ENCODE measurements at regions of chr17 and their contacts with region 1.

Region 1: DNA sequence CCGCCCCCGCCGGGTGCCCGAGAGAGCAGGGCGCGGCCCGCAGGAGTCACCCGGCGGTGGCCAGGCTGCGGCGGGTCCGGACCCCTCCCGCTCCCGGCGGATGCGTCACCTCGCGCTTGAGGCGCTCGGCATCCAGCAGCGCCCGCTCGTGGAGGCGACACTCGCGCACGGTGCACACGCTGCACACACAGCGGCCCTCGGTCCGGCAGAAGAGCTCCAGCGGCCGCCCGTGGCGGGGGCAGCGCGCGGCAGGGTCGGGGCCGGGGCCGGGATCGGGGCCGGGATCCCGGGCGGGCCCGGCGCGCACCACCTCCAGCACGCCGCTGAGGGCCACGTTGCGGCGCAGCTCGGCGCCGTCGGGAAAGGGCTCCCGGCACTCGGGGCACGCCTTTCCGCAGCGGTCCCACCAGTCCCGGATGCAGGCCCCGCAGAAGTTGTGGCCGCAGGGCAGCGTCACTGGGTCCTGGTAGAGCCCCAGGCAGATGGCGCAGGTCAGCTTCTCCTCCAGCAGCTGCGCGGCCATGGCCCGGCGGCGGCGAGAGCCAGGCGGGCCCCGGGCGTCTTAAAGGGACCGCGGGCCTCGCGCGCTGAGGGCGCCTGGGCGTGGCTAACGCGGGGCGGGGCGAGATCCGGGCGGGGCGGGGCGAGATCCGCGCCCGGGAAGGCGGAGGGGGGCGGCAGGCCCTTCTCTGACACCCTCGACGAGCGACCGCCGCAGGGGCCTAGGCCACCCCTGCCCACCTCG is at the start of gene TRIM65:
- DNase-seq: peak in 1 of 2 experiments; percentile 92
- H3K4me3 ChIP-seq: peak within 1 kb of the TSS; percentile 58 to 96 (median 80)
- H3K27ac ChIP-seq: peak within 1 kb of the TSS; percentile 59; the same call in 1 of the 2 replicates
- H3K4me1 ChIP-seq: peaks cover 4 to 25% (median 13%) of the 10 kb centered on the region in 4 experiments
- H3K27me3 ChIP-seq: no peaks in the 10 kb centered on the region
- CTCF ChIP-seq: no peak
- EP300 ChIP-seq: no peak
- POLR2A ChIP-seq: peak; percentile 88 to 94
- RAD21 ChIP-seq: no peak
- total RNA-seq, gene TRIM65: 47.7 and 48.6 TPM in 2 replicates

Region 2: GRCh38 chr17:75864448-75864871 is 32.1 kb before region 1 on chr17:
- CTCF ChIA-PET with region 1: interaction called, 34 read pairs
- POLR2A ChIA-PET with region 1: interaction called, 16 read pairs
- DNase-seq: no peak
- H3K4me3 ChIP-seq: no peak overlapping the region
- H3K27ac ChIP-seq: no peak overlapping the region
- H3K4me1 ChIP-seq: peaks cover 0 to 3% (median 1%) of the 10 kb centered on the region in 4 experiments; a peak in 5 of 7 replicates
- H3K27me3 ChIP-seq: no peaks in the 10 kb centered on the region
- CTCF ChIP-seq: no peak
- EP300 ChIP-seq: no peak
- POLR2A ChIP-seq: no peak
- RAD21 ChIP-seq: no peak

Region 3: GRCh38 chr17:75872434-75873351 is 23.9 kb before region 1 on chr17:
- CTCF ChIA-PET with region 1: interaction called, 69 read pairs
- POLR2A ChIA-PET with region 1: interaction called, 143 read pairs
- DNase-seq: no peak
- H3K4me3 ChIP-seq: no peak overlapping the region
- H3K27ac ChIP-seq: peak overlapping the region; percentile 18; the same call in 1 of the 2 replicates
- H3K4me1 ChIP-seq: peaks cover 0 to 24% (median 13%) of the 10 kb centered on the region in 4 experiments; a peak in 6 of 7 replicates
- H3K27me3 ChIP-seq: peaks cover 5 to 16% (median 13%) of the 10 kb centered on the region in 4 experiments; a peak in 6 of 7 replicates
- CTCF ChIP-seq: no peak
- EP300 ChIP-seq: no peak
- POLR2A ChIP-seq: no peak
- RAD21 ChIP-seq: no peak

Region 4: GRCh38 chr17:75877752-75878173 is 18.8 kb before region 1 on chr17:
- CTCF ChIA-PET with region 1: interaction called, 69 read pairs
- POLR2A ChIA-PET with region 1: interaction called, 143 read pairs
- DNase-seq: peak in 1 of 2 experiments; percentile 87
- H3K4me3 ChIP-seq: peak overlapping the region; percentile 40 to 72 (median 66)
- H3K27ac ChIP-seq: no peak overlapping the region
- H3K4me1 ChIP-seq: peaks cover 0 to 22% (median 12%) of the 10 kb centered on the region in 4 experiments; a peak in 6 of 7 replicates
- H3K27me3 ChIP-seq: peaks cover 10 to 31% (median 24%) of the 10 kb centered on the region in 4 experiments
- CTCF ChIP-seq: peak; percentile 53 to 69 (median 57)
- EP300 ChIP-seq: no peak
- POLR2A ChIP-seq: no peak
- RAD21 ChIP-seq: peak; percentile 10 to 44; a peak in 1 of 4 replicates

Region 5: DNA sequence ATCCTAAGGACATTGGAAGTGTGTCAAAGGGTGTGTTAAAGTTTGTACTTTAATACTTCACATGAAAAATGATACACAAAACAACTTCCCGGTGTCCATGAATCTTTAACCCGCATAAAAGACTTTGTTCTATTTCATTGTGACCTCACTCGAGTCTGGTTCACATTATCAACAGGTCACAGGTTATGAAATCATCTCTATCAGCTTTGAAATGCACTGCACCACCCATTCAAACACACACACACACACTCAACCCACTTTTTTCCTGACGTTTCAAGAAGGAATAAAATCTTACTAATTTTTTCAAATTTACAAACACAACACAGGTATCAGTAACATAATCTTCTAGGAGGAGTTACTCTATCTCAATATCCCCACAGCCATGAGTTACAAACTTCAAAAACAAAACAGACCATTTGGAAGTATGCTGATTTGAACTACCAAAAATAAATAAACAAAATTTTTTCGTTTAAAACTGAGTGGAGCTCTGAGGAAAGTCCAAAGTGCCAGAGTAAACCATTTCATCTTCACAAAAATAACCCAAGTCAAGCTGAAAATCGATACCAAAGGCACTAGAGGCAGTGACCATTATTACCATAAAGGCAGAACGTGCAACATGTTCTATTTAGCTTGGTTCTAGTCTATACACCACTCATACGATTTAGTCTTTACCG is 79.7 kb after region 1 on chr17:
- CTCF ChIA-PET with region 1: no interaction called
- POLR2A ChIA-PET with region 1: no interaction called
- DNase-seq: no peak
- H3K4me3 ChIP-seq: no peak overlapping the region
- H3K27ac ChIP-seq: no peak overlapping the region
- H3K4me1 ChIP-seq: peaks cover 0 to 4% (median 3%) of the 10 kb centered on the region in 4 experiments; a peak in 2 of 7 replicates
- H3K27me3 ChIP-seq: no peaks in the 10 kb centered on the region
- CTCF ChIP-seq: no peak
- EP300 ChIP-seq: no peak
- POLR2A ChIP-seq: no peak
- RAD21 ChIP-seq: no peak

Measured in H1 (cell line).